ENCODE measurements at regions of chr4 and their contacts with region 1.

Region 1: DNA sequence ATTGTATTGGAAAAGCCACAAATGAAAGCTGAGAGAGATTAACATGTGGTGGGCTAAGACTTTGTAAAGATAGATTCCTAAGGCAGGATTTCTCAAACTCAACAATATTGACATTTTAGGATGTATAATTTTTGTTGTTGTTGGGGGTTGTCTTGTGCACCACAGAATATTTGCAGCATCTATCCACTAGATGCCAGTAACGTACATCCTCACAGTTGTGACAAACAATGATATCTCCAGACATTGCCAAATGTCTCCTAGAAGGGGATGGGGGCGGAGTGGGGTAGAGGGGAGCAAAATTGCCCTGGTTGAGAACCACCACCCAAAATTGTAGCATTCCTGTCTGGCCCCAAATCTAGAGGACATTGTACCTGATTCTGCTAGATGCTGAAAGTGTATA is 14.7 kb upstream of the CBR4 start:
- H3K4me3 Mint-ChIP-seq: no peak overlapping the region
- H3K27ac Mint-ChIP-seq: no peak overlapping the region
- H3K4me1 Mint-ChIP-seq: no peaks in the 10 kb centered on the region
- H3K27me3 Mint-ChIP-seq: no peaks in the 10 kb centered on the region

Region 2: GRCh38 chr4:168648929-168649328 is 375.8 kb before region 1 on chr4:
- intact Hi-C with region 1: no loop called
- H3K4me3 Mint-ChIP-seq: no peak overlapping the region
- H3K27ac Mint-ChIP-seq: no peak overlapping the region
- H3K4me1 Mint-ChIP-seq: no peaks in the 10 kb centered on the region
- H3K27me3 Mint-ChIP-seq: peaks cover 4% of the 10 kb centered on the region

Region 3: GRCh38 chr4:169311643-169312365 is 287.0 kb after region 1 on chr4:
- intact Hi-C with region 1: loop called (anchors 5 kb)
- H3K4me3 Mint-ChIP-seq: no peak overlapping the region
- H3K27ac Mint-ChIP-seq: no peak overlapping the region
- H3K4me1 Mint-ChIP-seq: no peaks in the 10 kb centered on the region
- H3K27me3 Mint-ChIP-seq: no peaks in the 10 kb centered on the region

Region 4: GRCh38 chr4:169485791-169486742 is 461.3 kb after region 1 on chr4:
- intact Hi-C with region 1: loop called (anchors 2 kb)
- H3K4me3 Mint-ChIP-seq: no peak overlapping the region
- H3K27ac Mint-ChIP-seq: no peak overlapping the region
- H3K4me1 Mint-ChIP-seq: no peaks in the 10 kb centered on the region
- H3K27me3 Mint-ChIP-seq: no peaks in the 10 kb centered on the region